ENCODE measurements at regions of chr11 and their contacts with region 1.

Region 1: GRCh38 chr11:65418711-65419459 is 3.7 kb upstream of the NEAT1 start:
- DNase-seq: peak; percentile 87
- ATAC-seq: peak; percentile 50
- H3K4me3 Mint-ChIP-seq: peak overlapping the region; percentile 87
- H3K27ac Mint-ChIP-seq: peak overlapping the region; percentile 100
- H3K4me1 Mint-ChIP-seq: peaks cover 71% of the 10 kb centered on the region
- H3K27me3 Mint-ChIP-seq: no peaks in the 10 kb centered on the region
- CTCF ChIP-seq: no peak

Region 2: DNA sequence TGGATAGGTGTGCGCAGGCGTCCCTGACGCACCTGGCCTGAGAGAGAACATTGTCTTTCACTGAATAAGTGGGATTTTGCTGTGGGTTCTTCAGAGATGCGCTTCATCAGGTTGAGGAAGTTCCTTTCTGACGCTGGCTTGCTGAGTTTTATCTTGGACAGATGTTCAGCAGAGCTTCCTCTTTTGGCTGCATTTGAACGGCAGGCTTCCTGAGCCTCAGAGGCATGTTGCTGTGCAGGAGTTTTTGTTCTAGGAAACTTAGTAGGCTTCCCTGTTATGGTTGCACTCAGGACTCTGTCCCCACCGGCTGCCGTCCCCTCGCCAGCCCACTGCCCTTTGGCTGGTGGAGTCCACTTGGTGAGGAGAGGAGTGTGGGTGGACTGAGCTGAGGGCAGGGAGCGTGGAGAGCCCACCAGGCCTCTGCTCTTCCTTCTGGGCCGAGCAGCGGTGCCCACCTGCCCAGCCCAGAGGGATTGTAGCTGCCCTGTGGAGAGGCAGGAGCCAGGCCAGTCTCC is 15.2 kb before region 1 on chr11:
- CTCF ChIA-PET with region 1: interaction called, 5 read pairs
- POLR2A ChIA-PET with region 1: interaction called, 231 read pairs
- intact Hi-C with region 1: loop called (anchors 2 kb)
- DNase-seq: peak; percentile 46
- ATAC-seq: peak; percentile 73
- H3K4me3 Mint-ChIP-seq: peak overlapping the region; percentile 75
- H3K27ac Mint-ChIP-seq: peak overlapping the region; percentile 96
- H3K4me1 Mint-ChIP-seq: peaks cover 49% of the 10 kb centered on the region
- H3K27me3 Mint-ChIP-seq: no peaks in the 10 kb centered on the region
- CTCF ChIP-seq: no peak

Region 3: GRCh38 chr11:65440831-65441499 is 22.1 kb after region 1 on chr11:
- CTCF ChIA-PET with region 1: interaction called, 4 read pairs
- POLR2A ChIA-PET with region 1: interaction called, 332 read pairs
- intact Hi-C with region 1: no loop called
- DNase-seq: no peak
- ATAC-seq: peak; percentile 38
- H3K4me3 Mint-ChIP-seq: peak overlapping the region; percentile 77
- H3K27ac Mint-ChIP-seq: peak overlapping the region; percentile 92
- H3K4me1 Mint-ChIP-seq: peaks cover 70% of the 10 kb centered on the region
- H3K27me3 Mint-ChIP-seq: no peaks in the 10 kb centered on the region
- CTCF ChIP-seq: no peak

Region 4: DNA sequence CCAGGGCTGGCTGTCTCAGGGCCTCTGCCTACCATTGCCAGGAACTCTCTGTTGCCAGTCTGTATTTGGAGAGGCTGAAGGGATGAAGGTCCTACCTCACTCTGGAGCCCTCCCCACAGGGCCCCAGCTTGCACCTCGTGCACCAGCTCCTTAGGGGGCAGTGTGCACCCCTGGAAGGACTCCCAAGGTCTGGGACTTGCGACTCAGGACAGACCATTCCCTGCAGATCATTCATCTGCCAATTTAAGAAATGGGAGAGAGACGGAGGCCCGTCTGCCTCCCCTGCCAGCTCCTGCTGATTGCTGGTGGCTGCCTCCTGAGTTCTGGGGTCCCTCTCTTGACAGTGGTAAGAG is 52.5 kb after region 1 on chr11:
- CTCF ChIA-PET with region 1: interaction called, 15 read pairs
- POLR2A ChIA-PET with region 1: interaction called, 313 read pairs
- intact Hi-C with region 1: loop called (anchors 1 kb)
- DNase-seq: no peak
- ATAC-seq: no peak
- H3K4me3 Mint-ChIP-seq: peak overlapping the region; percentile 66
- H3K27ac Mint-ChIP-seq: peak overlapping the region; percentile 91
- H3K4me1 Mint-ChIP-seq: peaks cover 36% of the 10 kb centered on the region
- H3K27me3 Mint-ChIP-seq: no peaks in the 10 kb centered on the region
- CTCF ChIP-seq: no peak

Region 5: DNA sequence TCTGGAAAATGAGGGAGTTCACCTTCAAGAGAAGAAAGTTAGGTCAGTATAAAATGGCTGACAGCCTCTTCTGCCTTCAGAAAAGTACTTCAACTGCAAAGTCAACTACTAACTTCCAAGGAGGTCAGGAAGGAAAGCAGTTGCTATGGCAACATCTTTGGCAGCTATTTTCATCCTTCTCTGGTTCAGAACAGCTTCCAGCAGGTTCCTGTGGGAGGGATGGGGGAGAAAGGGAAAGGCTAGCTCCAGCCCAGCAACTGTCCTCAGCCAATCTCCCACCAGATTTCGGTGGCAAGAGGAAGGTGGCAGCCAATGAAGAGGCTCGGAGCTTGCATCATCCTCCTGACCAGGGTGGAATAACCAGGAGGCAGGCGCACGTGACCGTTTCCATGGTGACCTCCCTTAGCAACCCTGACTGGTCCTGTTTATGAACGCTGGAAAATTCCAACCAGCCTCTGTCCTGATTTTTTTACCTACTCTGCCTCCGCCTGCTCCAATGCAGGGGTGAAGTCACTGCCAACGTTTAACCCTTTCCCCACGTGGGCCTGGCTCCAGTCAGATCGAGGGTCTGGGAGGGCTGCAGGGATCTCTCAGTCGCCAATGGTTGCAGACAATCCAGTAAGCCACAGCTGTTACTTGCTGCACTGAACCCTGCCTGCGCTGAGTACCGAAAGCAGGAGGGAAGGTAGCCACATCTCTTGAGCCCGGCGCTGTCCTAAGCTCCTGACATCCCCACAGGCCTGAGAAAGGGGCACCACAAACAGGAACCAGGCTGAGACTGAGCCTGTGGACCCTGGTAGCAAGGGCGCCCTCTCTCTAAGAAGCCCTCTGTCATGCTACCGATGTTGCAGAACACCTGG is 68.8 kb after region 1 on chr11:
- CTCF ChIA-PET with region 1: interaction called, 9 read pairs
- POLR2A ChIA-PET with region 1: interaction called, 3,752 read pairs
- intact Hi-C with region 1: no loop called
- DNase-seq: no peak
- ATAC-seq: peak; percentile 56
- H3K4me3 Mint-ChIP-seq: peak overlapping the region; percentile 71
- H3K27ac Mint-ChIP-seq: peak overlapping the region; percentile 82
- H3K4me1 Mint-ChIP-seq: peaks cover 48% of the 10 kb centered on the region
- H3K27me3 Mint-ChIP-seq: no peaks in the 10 kb centered on the region
- CTCF ChIP-seq: no peak

Region 6: GRCh38 chr11:65558002-65558931 is 139.4 kb after region 1 on chr11 and contains the start of gene LTBP3:
- CTCF ChIA-PET with region 1: no interaction called
- POLR2A ChIA-PET with region 1: no interaction called
- intact Hi-C with region 1: no loop called
- DNase-seq: peak; percentile 44
- ATAC-seq: peak; percentile 61
- H3K4me3 Mint-ChIP-seq: peak within 1 kb of the TSS; percentile 79
- H3K27ac Mint-ChIP-seq: peak within 1 kb of the TSS; percentile 72
- H3K4me1 Mint-ChIP-seq: peaks cover 29% of the 10 kb centered on the region
- H3K27me3 Mint-ChIP-seq: peaks cover 4% of the 10 kb centered on the region
- CTCF ChIP-seq: no peak
- total RNA-seq, gene LTBP3: 25.0 and 25.3 TPM in 2 replicates

Region 7: GRCh38 chr11:65646921-65647751 is 228.3 kb after region 1 on chr11:
- CTCF ChIA-PET with region 1: no interaction called
- POLR2A ChIA-PET with region 1: no interaction called
- intact Hi-C with region 1: no loop called
- DNase-seq: no peak
- ATAC-seq: no peak
- H3K4me3 Mint-ChIP-seq: no peak overlapping the region
- H3K27ac Mint-ChIP-seq: no peak overlapping the region
- H3K4me1 Mint-ChIP-seq: peaks cover 42% of the 10 kb centered on the region
- H3K27me3 Mint-ChIP-seq: no peaks in the 10 kb centered on the region
- CTCF ChIP-seq: no peak